GM12878 (cell line): ENCODE measurements at regions of chr1 and their contacts with region 1.

Region 1: DNA sequence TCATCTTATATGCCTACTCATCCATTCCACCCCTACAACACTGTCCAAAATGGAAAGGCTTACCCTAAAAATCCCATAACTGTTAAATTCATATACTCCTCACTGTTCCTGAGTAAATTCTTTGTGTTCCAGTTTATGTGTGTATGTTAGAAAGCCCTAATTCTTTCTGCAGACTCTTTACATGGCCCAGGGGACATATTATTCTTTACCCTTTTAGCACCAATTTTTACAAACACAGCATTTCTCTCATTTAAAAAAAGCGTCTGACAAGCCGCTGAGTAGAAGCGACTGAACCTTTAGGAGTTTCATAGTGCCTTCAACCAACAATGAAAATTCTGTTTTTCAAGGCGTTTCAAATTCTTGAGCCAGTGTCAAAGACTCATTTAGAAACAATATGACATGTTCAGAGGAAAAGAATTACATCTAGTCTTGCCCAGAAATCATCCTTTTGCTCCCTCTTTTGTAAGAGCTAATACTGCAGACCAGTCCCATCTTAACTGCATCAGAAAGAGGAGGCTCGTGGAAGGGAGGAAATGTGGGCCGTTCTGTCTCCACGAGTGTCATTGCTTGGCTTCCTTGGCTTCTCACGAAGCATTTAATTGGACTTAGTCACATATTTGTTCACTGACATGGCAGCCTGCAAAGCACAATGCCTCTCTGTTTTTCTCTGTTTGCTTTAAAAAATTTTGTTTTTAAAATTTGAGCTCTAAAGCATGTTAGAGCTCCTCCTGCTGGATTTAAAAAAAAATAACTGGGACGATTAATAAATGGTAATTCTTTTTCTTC is 21.3 kb upstream of the C1orf105 start:
- DNase-seq: no peak
- ATAC-seq: peak; percentile 58
- H3K4me3 ChIP-seq: 0 out of 2 replicates have a peak overlapping the region, but pooled peaks have one; percentile 3
- H3K27ac ChIP-seq: peak overlapping the region; percentile 89
- H3K4me1 ChIP-seq: peaks cover 58% of the 10 kb centered on the region
- H3K27me3 ChIP-seq: no peaks in the 10 kb centered on the region
- CTCF ChIP-seq: peak; percentile 35 to 58 (median 54); a peak in 5 of 6 replicates
- EP300 ChIP-seq: no peak
- POLR2A ChIP-seq: no peak
- RAD21 ChIP-seq: peak; percentile 76

Region 2: DNA sequence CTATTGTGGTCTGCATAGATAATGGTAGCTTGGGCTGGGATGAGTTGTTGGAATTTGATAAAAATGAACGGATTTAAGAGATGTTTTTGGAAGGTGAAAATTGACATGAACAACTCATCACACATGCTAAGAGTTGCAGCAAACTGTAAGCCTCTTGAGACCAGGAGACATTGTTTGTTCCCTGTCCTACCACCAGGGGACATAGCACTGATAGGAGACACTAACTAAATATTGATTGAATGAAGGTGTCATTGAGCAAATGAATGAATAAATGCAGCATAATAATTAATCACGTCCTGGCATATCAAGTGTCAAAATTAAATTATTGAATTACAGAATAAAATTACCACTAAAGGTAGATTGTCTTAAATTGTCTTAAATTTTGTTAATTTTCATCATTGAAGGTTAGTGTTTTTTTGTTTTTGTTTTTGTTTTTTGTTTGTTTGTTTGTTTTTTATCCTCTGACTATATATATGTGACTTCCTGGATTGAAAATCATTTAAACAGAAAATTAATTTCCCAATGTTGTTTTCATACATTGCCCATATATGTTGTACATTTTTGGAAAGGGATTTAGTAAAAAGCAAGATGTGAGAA is 264.0 kb before region 1 on chr1:
- CTCF ChIA-PET with region 1: interaction called, 27 read pairs
- POLR2A ChIA-PET with region 1: no interaction called
- RAD21 ChIA-PET with region 1: interaction called, 24 read pairs
- SMC1A ChIA-PET with region 1: interaction called, 39 read pairs
- in situ Hi-C with region 1: no loop called
- intact Hi-C with region 1: loop called (anchors 2 kb)
- DNase-seq: no peak
- ATAC-seq: peak; percentile 62
- H3K4me3 ChIP-seq: no peak overlapping the region
- H3K27ac ChIP-seq: no peak overlapping the region
- H3K4me1 ChIP-seq: no peaks in the 10 kb centered on the region
- H3K27me3 ChIP-seq: no peaks in the 10 kb centered on the region
- CTCF ChIP-seq: peak; percentile 35 to 63 (median 56)
- EP300 ChIP-seq: no peak
- POLR2A ChIP-seq: no peak
- RAD21 ChIP-seq: peak; percentile 77

Region 3: DNA sequence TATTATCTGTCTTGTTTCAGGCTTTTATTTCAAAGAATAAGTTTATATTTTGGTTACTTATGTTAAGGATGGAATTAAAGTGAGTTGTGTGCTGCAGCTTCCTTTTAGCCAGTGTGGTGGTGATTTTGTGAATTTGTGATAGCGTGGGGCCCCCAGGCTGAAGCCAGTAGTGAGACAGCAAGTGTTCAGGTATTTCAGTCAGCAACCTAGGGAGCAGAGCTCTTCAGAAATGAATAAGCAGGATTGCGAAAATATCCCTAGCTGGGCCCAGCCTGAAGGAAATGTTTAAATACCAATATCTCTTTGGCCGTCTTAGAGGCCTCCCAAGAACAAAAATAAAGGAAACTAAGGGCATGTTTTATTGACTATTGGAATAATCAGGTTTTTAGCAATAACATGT is 129.5 kb before region 1 on chr1:
- CTCF ChIA-PET with region 1: interaction called, 3 read pairs
- POLR2A ChIA-PET with region 1: no interaction called
- RAD21 ChIA-PET with region 1: interaction called, 8 read pairs
- SMC1A ChIA-PET with region 1: interaction called, 12 read pairs
- in situ Hi-C with region 1: no loop called
- intact Hi-C with region 1: loop called (anchors 5 kb)
- DNase-seq: no peak
- ATAC-seq: no peak
- H3K4me3 ChIP-seq: no peak overlapping the region
- H3K27ac ChIP-seq: no peak overlapping the region
- H3K4me1 ChIP-seq: peaks cover 19% of the 10 kb centered on the region
- H3K27me3 ChIP-seq: no peaks in the 10 kb centered on the region
- CTCF ChIP-seq: no peak
- EP300 ChIP-seq: no peak
- POLR2A ChIP-seq: no peak
- RAD21 ChIP-seq: no peak

Region 4: DNA sequence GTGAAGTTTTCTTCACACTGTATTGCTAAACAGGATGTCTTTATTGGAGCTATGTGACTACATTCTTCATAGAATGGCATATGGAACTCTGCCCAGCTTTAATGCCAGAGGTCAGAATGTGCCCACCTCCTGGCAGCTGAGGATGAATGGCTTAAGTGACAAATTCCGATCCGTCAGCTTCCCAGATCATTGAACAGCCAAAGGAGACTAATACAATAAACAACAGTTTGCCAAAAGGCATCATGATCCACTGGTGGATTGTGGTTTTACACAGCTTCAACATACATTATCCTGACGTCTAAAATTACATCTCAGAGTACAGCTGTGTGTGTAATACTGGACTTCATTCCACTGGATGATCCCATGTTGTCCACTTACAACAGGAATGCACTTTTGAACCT is 47.4 kb before region 1 on chr1:
- CTCF ChIA-PET with region 1: interaction called, 10 read pairs
- POLR2A ChIA-PET with region 1: interaction called, 4 read pairs
- RAD21 ChIA-PET with region 1: interaction called, 394 read pairs
- SMC1A ChIA-PET with region 1: interaction called, 458 read pairs
- in situ Hi-C with region 1: no loop called
- intact Hi-C with region 1: no loop called
- DNase-seq: no peak
- ATAC-seq: no peak
- H3K4me3 ChIP-seq: no peak overlapping the region
- H3K27ac ChIP-seq: no peak overlapping the region
- H3K4me1 ChIP-seq: peaks cover 4% of the 10 kb centered on the region
- H3K27me3 ChIP-seq: no peaks in the 10 kb centered on the region
- CTCF ChIP-seq: no peak
- EP300 ChIP-seq: no peak
- POLR2A ChIP-seq: no peak
- RAD21 ChIP-seq: no peak

Region 5: GRCh38 chr1:172380441-172381244 is 18.5 kb before region 1 on chr1:
- CTCF ChIA-PET with region 1: interaction called, 16 read pairs
- POLR2A ChIA-PET with region 1: interaction called, 41 read pairs
- RAD21 ChIA-PET with region 1: interaction called, 37 read pairs
- SMC1A ChIA-PET with region 1: interaction called, 345 read pairs
- in situ Hi-C with region 1: no loop called
- intact Hi-C with region 1: loop called (anchors 2 kb)
- DNase-seq: no peak
- ATAC-seq: peak; percentile 98
- H3K4me3 ChIP-seq: peak overlapping the region; percentile 4; the same call in 1 of the 2 replicates
- H3K27ac ChIP-seq: peak overlapping the region; percentile 93
- H3K4me1 ChIP-seq: peaks cover 20% of the 10 kb centered on the region
- H3K27me3 ChIP-seq: no peaks in the 10 kb centered on the region
- CTCF ChIP-seq: peak in 1 of 3 experiments; percentile 19; a peak in 1 of 6 replicates
- EP300 ChIP-seq: peak; percentile 16 to 83; a peak in 3 of 4 replicates
- POLR2A ChIP-seq: no peak
- RAD21 ChIP-seq: peak; percentile 27; the same call in 1 of the 2 replicates

Region 6: DNA sequence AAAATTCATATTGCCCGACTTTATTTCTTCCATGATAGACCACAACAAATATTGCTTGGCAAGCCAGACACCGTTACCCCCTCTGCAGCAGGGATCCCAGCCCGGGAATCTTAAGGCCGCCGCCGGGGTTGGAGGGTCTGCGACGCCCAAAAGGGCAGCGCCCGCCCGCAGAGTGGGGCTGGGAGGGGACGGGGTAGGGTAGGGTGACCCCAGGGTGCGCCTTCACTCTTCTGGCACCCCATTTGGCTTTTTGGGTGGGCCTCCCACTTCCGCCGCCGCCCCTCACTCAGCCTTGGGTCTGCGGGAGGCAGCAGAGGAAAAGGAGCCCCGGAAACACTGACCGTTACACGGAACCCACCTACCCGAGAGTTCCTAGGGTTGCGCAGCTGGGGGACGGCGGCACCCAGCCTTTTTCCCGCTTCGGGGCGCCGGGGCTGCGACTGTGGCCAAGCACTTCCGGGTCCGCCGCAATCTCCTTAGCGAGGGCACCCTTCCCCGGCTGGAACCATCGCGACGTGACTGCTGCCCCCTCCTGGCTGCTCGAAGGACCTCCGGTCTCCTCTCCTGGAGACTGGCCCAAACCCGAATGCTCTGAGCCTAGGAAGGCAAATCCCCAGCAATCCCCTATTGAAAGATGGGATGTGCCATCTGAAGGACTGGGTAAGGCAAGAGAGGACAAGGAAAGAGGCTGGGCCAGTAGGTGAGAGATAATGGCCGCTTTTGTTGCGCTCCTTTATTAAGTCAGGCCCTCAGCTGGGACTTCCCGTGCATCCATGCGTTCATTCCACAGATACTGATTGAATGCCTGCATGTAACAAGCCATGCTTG is 44.7 kb after region 1 on chr1 and contains the start of gene PIGC:
- CTCF ChIA-PET with region 1: interaction called, 7 read pairs
- POLR2A ChIA-PET with region 1: no interaction called
- RAD21 ChIA-PET with region 1: interaction called, 6 read pairs
- SMC1A ChIA-PET with region 1: interaction called, 11 read pairs
- in situ Hi-C with region 1: no loop called
- intact Hi-C with region 1: no loop called
- DNase-seq: peak; percentile 59
- ATAC-seq: peak; percentile 99
- H3K4me3 ChIP-seq: peak within 1 kb of the TSS; percentile 94
- H3K27ac ChIP-seq: peak within 1 kb of the TSS; percentile 82
- H3K4me1 ChIP-seq: no peaks in the 10 kb centered on the region
- H3K27me3 ChIP-seq: no peaks in the 10 kb centered on the region
- CTCF ChIP-seq: peak; percentile 89 to 93 (median 91)
- EP300 ChIP-seq: no peak
- POLR2A ChIP-seq: peak; percentile 91
- RAD21 ChIP-seq: peak; percentile 73
- polyA plus RNA-seq, gene PIGC: 23.3 to 29.7 TPM